Heart right ventricle (tissue), 16 donors: ENCODE measurements at regions of chr4 and their contacts with region 1.

Region 1: DNA sequence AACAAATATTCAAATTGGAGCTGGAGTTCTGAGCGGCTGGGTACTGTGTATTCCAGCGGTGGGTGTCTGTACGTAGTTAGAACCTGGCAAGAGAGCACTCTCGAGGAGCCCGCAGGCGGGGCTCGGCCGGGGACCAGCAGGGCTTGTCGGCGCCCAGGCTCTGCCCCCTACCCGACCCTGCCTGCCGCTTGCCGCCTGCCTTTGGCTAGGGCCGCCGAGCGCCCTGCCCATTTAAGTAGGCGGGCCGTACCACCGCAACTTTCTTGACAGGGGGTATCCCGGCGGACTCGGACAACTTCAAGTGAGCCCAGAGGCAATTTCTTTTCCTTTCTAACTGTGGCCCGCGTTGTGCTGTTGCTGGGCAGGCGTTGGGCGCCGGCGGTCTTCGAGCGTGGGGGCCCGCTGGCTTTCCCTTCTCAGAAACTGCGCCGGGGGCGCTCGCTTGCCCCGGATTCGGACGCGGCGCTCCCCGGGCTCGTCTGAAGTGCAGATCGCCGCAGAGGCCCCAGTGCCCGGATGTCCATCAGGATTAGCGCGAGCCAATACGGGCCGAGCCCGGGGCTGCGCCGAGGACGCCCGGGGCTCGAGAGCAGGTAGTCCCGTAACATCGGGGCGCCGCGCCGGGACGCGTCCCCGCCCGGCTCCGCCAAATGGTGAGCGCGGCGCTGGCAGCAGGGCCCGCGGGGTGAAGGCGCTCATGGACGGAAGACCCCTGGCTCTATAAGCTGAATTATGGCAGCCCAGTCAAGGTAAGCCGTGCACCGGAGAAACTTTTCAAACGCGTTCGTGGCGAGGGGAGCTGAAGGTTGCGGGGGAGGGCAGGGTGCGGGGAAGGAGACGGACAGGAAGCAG is 72.1 kb downstream of the AFF1 start:
- DNase-seq: peak; percentile 93
- ATAC-seq: peak; percentile 92 to 98 (median 95)
- H3K4me3 ChIP-seq: peak overlapping the region; percentile 72 to 90 (median 79)
- H3K27ac ChIP-seq: peak overlapping the region; percentile 97 to 99 (median 98)
- H3K4me1 ChIP-seq: peaks cover 4 to 56% (median 48%) of the 10 kb centered on the region in 9 donors
- H3K27me3 ChIP-seq: no peaks in the 10 kb centered on the region
- CTCF ChIP-seq: peak in 5 of 9 donors; percentile 5 to 56 (median 31)

Region 2: GRCh38 chr4:86934771-86935565 is 71.9 kb before region 1 on chr4 and contains the start of gene AFF1:
- intact Hi-C with region 1: loop called in 8 of 10 experiments (anchors 2 to 5 kb)
- DNase-seq: peak; percentile 94 to 96
- ATAC-seq: peak; percentile 93 to 97 (median 94)
- H3K4me3 ChIP-seq: peak within 1 kb of the TSS; percentile 52 to 99 (median 94)
- H3K27ac ChIP-seq: peak within 1 kb of the TSS; percentile 94 to 100 (median 98)
- H3K4me1 ChIP-seq: peaks cover 0 to 52% (median 35%) of the 10 kb centered on the region in 9 donors
- H3K27me3 ChIP-seq: no peaks in the 10 kb centered on the region
- CTCF ChIP-seq: peak; percentile 22 to 75 (median 61)
- total RNA-seq, gene AFF1: 59.5 to 90.2 (median 77.3) TPM

Region 3: DNA sequence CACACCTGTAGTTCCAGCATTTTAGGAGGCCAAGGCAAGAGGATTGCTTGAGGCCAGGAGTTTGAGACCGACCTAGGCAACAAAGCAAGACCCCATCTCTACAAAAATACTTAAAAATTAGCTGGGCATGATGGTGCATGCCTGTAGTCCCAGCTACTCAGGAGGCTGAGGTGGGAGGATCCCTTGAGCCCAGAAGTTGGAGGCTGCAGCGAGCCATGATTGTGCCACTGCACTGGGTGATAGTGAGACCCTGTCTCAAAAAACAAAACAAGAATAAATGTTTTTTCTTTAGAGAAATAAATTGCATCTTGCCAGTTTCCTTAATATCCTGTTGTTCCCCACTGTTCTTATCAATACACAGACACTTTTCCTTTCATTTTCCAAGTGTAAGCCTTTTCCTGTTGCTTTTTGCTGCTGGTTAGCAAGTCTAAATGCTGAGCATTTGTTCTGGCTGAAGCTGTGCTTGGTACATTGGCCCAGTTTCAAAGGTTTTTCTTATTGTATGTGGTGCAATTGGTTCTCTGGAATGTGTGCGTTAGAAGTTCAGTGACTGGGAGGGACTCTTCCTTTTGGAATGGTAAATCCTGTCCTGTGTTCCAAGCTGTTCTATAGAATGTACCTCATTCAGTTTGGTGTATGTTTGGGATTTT is 26.1 kb after region 1 on chr4:
- intact Hi-C with region 1: loop called in 2 of 10 experiments (anchors 2 kb)
- DNase-seq: no peak
- ATAC-seq: peak in 6 of 8 donors; percentile 19 to 48 (median 32)
- H3K4me3 ChIP-seq: peak overlapping the region in 4 of 10 donors; percentile 13 to 24 (median 21)
- H3K27ac ChIP-seq: peak overlapping the region; percentile 58 to 95 (median 80)
- H3K4me1 ChIP-seq: peaks cover 62 to 100% (median 99%) of the 10 kb centered on the region in 9 donors
- H3K27me3 ChIP-seq: no peaks in the 10 kb centered on the region
- CTCF ChIP-seq: no peak

Region 4: DNA sequence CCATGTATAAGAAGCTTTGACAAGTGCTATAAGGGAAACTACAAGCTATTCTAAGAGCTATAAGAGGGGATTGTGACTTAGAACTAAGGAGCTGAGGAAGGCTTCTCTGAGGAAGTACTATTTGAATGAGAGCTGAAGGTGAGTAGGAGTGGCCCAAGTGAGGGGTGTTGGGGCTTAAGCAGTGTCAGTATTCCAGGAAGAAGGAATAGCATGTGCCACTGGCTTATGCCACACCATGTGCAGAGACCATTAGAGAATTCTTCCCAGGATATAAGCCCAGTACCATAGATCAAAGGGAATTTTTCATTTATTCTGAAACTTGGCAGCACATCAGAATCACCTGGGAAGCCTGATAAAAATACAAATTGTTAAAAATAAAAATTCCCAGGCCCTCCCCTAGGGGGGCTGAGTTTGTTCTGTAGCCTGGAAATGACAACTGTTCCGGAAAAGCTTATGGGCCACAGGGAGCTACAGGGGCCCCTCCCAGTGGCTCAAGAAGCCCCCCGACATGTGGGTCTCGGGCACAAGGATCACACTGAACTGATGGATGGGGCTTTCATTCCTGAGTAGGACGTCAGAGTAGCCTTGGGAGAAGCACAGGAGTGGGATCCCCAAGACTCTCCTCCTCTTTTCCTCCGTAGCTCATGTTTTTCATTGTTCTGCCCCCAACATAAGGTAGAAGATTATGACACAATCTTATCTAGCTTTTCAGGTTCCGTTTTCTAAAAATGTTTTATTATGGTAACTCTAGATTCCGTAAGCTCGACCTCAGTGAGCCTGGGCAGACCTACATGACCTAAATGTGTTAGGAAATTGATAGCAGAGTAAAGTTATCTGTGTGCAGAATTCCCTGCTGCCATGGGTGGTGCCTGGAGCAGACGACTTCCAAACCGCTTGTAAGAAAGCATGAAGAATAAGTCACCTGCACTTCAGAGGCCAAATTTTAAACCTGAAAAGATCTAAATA is 47.2 kb after region 1 on chr4:
- intact Hi-C with region 1: loop called in 4 of 10 experiments (anchors 2 to 5 kb)
- DNase-seq: no peak
- ATAC-seq: peak in 5 of 8 donors; percentile 34 to 52 (median 39)
- H3K4me3 ChIP-seq: peak overlapping the region in 1 of 10 donors; percentile 6
- H3K27ac ChIP-seq: peak overlapping the region; percentile 41 to 83 (median 68)
- H3K4me1 ChIP-seq: peaks cover 21 to 100% (median 87%) of the 10 kb centered on the region in 9 donors
- H3K27me3 ChIP-seq: no peaks in the 10 kb centered on the region
- CTCF ChIP-seq: peak in 2 of 9 donors; percentile 17 to 23

Region 5: GRCh38 chr4:87087420-87087819 is 80.5 kb after region 1 on chr4:
- intact Hi-C with region 1: loop called in 8 of 10 experiments (anchors 2 to 10 kb)
- DNase-seq: no peak
- ATAC-seq: peak in 1 of 8 donors; percentile 43
- H3K4me3 ChIP-seq: no peak overlapping the region
- H3K27ac ChIP-seq: peak overlapping the region in 4 of 10 donors; percentile 4 to 31 (median 10)
- H3K4me1 ChIP-seq: peaks cover 3 to 68% (median 48%) of the 10 kb centered on the region in 9 donors
- H3K27me3 ChIP-seq: no peaks in the 10 kb centered on the region
- CTCF ChIP-seq: no peak

Region 6: GRCh38 chr4:87220094-87220822 is 213.4 kb after region 1 on chr4 and contains the start of gene KLHL8:
- intact Hi-C with region 1: loop called in 2 of 10 experiments (anchors 2 to 10 kb)
- DNase-seq: peak; percentile 86 to 90
- ATAC-seq: peak; percentile 98 to 100 (median 98)
- H3K4me3 ChIP-seq: peak within 1 kb of the TSS; percentile 77 to 99 (median 92)
- H3K27ac ChIP-seq: peak within 1 kb of the TSS; percentile 32 to 94 (median 94)
- H3K4me1 ChIP-seq: peaks cover 0 to 18% (median 12%) of the 10 kb centered on the region in 9 donors
- H3K27me3 ChIP-seq: no peaks in the 10 kb centered on the region
- CTCF ChIP-seq: peak in 2 of 9 donors; percentile 11 to 38
- total RNA-seq, gene KLHL8: 10.4 to 15.0 (median 11.9) TPM

Region 7: DNA sequence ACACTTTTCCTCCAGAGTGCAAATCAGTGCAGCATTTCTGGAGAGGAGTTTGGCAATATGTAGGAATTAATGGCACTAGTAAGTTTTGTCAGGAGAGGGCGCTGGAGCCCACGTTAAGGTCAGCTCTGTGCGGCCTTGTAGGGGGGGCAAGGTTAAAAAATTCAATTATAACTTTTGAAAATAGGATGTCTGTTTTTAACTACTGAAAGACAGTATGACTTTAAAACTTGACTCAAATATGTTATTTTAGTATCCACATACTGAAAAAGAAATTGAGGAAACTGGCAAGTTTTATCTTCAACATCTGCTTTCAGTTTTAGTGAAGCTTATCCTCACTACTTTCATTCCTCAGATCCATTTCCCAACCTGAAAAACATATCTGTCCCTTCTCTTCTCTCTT is 346.7 kb after region 1 on chr4:
- intact Hi-C with region 1: no loop called
- DNase-seq: peak; percentile 27 to 63
- ATAC-seq: peak in 6 of 8 donors; percentile 61 to 93 (median 76)
- H3K4me3 ChIP-seq: no peak overlapping the region
- H3K27ac ChIP-seq: peak overlapping the region in 7 of 10 donors; percentile 14 to 75 (median 47)
- H3K4me1 ChIP-seq: peaks cover 0 to 19% (median 6%) of the 10 kb centered on the region in 9 donors
- H3K27me3 ChIP-seq: no peaks in the 10 kb centered on the region
- CTCF ChIP-seq: peak; percentile 46 to 82 (median 66)